HEK293T (cell line): ENCODE measurements at regions of chr6 and their contacts with region 1.

Region 1: DNA sequence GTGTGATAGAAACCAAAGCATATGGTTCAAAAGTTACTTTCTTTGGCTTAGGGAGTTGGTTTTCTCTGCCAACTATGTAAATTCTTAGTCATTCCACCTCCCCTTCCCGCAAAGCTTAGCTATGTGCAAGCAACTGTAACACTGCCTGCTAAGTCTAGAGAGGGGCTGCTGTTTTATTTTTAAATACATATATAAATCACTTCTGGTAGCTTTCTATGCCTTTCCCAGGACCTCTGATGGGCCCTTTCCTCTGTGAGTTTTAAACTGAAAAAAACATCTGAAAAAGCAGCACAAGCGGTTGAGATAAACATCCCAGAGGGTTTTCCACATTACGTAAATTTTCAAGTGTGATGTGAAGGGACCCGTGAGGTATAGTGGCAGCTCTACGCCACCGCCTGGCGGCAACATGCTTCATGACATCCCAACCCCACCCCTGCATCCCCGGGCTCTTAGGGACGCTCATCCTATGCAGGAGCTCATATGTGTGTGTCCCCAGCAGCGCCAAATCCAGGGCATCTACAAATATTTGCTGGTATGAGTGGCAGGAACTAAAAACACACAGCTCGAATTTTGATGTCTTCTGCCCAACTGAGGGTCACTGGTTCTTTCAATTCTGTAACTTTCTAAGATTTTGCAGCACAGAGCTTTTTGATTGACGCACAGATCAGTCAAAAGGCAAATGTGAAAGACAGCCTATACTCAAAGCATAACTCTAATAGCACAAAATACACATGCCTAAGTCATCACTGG is 12.7 kb downstream of the SAYSD1 start:
- DNase-seq: peak; percentile 77

Region 2: DNA sequence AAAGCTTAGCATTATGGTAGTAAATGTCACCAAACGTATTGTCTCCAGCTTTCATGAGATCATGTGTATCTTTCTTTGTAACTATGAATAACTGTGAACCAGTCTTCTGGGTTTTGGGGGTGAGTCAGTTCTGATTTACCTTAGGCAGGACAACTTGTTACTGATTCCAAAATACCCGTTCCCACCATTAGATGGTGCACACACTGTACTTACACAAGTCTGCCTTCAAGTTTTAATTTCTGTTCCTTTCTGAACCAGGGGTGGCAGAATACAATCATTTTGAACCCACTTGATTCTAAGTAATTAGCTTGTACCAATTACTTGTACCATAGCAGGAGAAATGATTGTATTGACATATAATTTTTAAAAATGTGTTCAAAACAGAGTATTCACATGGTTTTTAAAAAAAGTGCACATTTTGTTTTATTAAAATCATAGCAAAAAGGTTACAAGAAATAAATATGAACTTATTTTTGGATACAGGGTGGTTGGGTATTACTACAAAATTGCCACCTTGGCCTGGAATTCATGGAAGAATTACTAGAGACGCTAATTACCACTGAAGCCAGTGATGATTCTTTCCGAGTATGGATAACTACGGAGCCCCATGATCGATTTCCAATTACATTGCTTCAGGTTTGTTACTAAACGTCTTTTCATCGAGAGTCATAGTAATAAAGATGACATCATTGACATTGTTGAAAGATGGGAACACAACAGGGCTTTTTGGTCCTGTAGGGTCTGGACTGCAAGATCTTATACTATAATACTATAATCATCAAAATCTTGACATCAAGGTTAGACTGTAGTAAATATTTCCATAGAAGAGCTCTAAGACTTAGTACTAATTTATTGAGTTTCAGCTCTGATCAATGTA is 128.8 kb before region 1 on chr6:
- CTCF ChIA-PET with region 1: interaction called, 12 read pairs
- POLR2A ChIA-PET with region 1: no interaction called
- DNase-seq: peak; percentile 54

Region 3: GRCh38 chr6:38997128-38997761 is 105.0 kb before region 1 on chr6:
- CTCF ChIA-PET with region 1: interaction called, 28 read pairs
- POLR2A ChIA-PET with region 1: interaction called, 5 read pairs
- DNase-seq: peak; percentile 71

Region 4: GRCh38 chr6:39092124-39092523 is 10.1 kb before region 1 on chr6:
- CTCF ChIA-PET with region 1: interaction called, 12 read pairs
- POLR2A ChIA-PET with region 1: no interaction called
- DNase-seq: peak; percentile 42

Region 5: DNA sequence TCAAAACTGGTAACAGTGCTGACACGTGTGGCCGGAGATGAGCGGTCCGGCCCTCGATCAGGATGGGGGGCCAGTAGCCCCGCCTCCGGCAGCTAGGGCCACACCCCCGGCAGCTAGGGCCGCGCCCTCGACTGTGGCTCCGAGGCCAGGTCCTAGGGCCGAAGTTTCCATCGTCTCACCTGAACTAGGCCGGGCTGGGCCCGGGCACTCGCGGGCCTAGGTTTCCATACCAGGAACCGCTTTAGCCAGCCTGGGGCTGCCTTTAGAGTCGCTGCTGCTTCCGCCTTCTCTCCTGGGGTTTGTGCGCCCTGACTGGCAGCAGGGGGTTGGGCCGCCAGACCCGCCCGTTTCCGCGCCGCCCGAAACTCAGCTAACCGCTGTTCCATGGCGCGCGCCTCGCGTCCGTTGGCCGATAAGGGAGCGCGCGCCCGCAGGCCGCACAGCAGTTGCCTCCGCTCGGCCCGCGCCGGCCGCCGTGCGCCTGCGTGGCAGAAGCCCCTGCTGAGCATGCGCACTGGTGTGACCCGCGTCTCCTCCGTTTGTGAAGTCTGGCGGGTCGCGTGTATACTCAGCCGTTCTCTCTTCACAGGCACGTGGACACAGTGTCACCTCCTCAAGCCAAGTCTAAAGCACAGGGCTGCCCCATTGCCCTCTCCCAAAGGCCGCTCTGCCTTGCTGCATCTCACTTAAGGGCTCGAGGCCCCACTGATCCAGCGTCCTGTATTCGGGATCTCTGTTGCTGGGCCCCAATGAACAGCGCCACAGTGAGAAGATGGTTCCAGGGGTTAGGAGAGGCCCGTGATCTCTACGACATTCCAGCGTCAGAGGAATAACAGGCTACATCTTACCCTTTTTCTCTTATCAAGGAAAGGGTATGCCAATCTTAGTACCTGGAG is 12.7 kb after region 1 on chr6 and contains the start of gene SAYSD1:
- CTCF ChIA-PET with region 1: interaction called, 7 read pairs
- POLR2A ChIA-PET with region 1: interaction called, 11 read pairs
- DNase-seq: peak; percentile 96

Region 6: GRCh38 chr6:39357998-39358686 is 255.9 kb after region 1 on chr6:
- CTCF ChIA-PET with region 1: no interaction called
- POLR2A ChIA-PET with region 1: no interaction called
- DNase-seq: no peak